Activated CD4-positive, alpha-beta T cell treated with anti-CD3 and anti-CD28 coated beads, Interleukin-2, amount 10 ng/mL, durations not matched to agents 7 days and 5 days (primary cell): ENCODE measurements at regions of chr4 and their contacts with region 1.

Region 1: GRCh38 chr4:152112887-152113286 is 352.1 kb upstream of the GATB start:
- DNase-seq: no peak
- H3K4me3 Mint-ChIP-seq: no peak overlapping the region
- H3K27ac Mint-ChIP-seq: peak overlapping the region; percentile 15
- H3K4me1 Mint-ChIP-seq: peaks cover 75% of the 10 kb centered on the region
- H3K27me3 Mint-ChIP-seq: no peaks in the 10 kb centered on the region

Region 2: GRCh38 chr4:151960449-151961230 is 152.2 kb before region 1 on chr4:
- CTCF ChIA-PET with region 1: no interaction called
- POLR2A ChIA-PET with region 1: no interaction called
- DNase-seq: no peak
- H3K4me3 Mint-ChIP-seq: no peak overlapping the region
- H3K27ac Mint-ChIP-seq: no peak overlapping the region
- H3K4me1 Mint-ChIP-seq: no peaks in the 10 kb centered on the region
- H3K27me3 Mint-ChIP-seq: peaks cover 10% of the 10 kb centered on the region

Region 3: GRCh38 chr4:152100379-152101201 is 12.3 kb before region 1 on chr4:
- CTCF ChIA-PET with region 1: interaction called, 31 read pairs
- POLR2A ChIA-PET with region 1: interaction called, 3 read pairs
- DNase-seq: peak; percentile 92
- H3K4me3 Mint-ChIP-seq: peak overlapping the region; percentile 76
- H3K27ac Mint-ChIP-seq: peak overlapping the region; percentile 99
- H3K4me1 Mint-ChIP-seq: peaks cover 83% of the 10 kb centered on the region
- H3K27me3 Mint-ChIP-seq: no peaks in the 10 kb centered on the region